ENCODE measurements at regions of chr21 and their contacts with region 1.

Region 1: DNA sequence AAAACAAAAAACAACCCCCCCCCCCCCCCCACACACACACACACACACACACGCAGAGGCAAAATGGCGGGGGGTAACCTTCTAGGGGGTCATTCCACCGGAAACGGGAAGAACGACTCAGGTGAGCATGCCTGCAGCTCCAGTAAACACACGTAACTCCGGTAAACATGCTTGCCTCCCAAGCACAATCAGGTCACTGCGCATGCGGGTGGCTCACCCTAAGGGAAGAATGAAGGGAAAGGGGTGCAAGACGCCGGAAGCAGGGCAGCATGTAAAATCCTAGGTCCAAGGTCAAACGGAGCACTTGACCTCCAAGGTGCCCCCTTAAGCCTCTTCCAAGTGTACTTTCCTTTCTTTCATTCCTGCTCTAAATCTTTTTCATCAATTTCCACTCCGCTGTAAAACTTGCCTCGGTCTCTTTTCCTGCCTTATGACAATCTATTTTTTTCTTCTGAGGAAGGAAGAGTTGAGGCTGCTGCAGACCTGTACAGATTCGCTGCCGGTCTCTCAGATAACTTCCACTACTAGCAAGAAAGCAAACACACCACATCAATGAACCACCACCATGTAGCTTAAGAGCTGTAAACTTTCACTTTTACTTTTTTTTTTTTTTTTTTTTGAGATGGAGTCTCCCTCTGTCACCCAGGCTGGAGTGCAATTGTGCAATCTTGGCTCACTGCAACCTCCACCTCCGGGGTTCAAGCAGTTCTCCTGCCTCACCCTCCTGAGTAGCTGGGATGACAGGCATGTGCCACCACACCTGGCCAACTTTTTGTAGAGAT is 21.0 kb upstream of the CBR3 start:
- DNase-seq: peak; percentile 20
- H3K4me3 Mint-ChIP-seq: peak overlapping the region; percentile 57
- H3K27ac Mint-ChIP-seq: peak overlapping the region; percentile 73
- H3K4me1 Mint-ChIP-seq: peaks cover 29% of the 10 kb centered on the region
- H3K27me3 Mint-ChIP-seq: peaks cover 14% of the 10 kb centered on the region

Region 2: DNA sequence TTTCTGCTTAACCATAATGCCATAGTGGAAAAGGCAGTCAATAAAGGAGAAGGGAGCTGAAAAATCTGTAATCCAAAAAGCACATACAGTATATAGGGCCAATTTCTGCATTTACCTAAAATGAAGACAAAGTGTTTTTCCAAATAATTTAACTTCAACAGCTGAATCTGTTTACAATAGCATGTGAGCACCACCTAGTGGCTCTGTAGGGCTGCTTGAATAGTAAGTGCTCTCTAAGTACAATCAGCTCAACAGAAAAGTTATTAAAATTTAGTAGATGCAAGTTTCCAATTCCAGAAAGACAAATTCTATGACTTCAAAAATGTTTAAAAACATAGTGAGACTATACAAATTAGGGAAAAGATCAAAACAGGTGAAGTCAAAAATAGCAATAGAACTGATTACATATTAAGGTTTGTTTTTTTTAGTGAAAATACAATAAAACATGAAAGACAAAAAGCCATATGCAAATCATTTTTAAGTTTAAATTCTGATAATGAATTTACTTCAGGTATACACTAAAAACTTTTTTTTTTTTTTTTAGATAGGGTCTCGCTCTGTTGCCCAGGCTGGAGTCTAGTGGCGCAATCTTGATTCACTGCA is 273.5 kb before region 1 on chr21:
- CTCF ChIA-PET with region 1: interaction called, 11 read pairs
- POLR2A ChIA-PET with region 1: no interaction called
- DNase-seq: peak; percentile 52
- H3K4me3 Mint-ChIP-seq: no peak overlapping the region
- H3K27ac Mint-ChIP-seq: no peak overlapping the region
- H3K4me1 Mint-ChIP-seq: no peaks in the 10 kb centered on the region
- H3K27me3 Mint-ChIP-seq: peaks cover 13% of the 10 kb centered on the region

Region 3: DNA sequence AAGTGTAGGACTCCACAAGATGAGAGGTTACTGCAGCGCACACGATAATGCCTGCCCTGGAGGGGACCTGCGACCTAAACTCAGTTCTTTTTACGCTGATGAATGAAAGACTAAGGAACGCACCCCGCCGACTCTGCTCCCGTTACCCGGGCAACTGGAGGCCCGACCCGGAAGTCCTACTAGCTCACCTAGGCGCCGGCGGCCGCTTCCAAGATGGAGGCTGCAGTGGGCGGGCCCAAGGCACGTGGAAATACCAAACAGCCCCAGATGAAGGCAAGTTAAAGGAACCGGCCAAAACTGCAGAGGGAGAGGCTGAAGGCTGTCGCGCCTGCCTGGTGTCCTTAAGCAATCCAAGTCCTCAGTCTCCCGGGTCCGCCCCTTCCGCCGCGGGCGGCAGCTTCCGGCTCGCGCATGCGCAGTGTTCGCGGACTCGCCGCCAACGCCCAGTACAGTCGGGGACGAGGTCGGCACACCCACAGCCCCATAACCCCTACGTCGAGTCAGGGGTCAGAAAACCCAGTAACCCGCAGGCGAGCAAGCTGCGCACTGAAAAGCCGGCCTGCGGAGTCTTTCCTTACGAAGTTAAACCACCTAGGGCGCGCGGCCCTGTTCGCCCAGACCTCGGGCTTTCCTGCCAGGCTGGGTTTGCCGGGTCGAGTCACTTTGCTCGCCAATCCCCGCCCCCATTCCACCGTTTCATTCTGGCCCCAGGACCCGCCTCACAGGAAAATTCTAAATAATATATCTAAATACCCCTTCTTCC is 53.5 kb before region 1 on chr21 and contains the start of gene SETD4:
- CTCF ChIA-PET with region 1: interaction called, 22 read pairs
- POLR2A ChIA-PET with region 1: interaction called, 21 read pairs
- DNase-seq: peak; percentile 90
- H3K4me3 Mint-ChIP-seq: peak within 1 kb of the TSS; percentile 96
- H3K27ac Mint-ChIP-seq: peak within 1 kb of the TSS; percentile 98
- H3K4me1 Mint-ChIP-seq: peaks cover 35% of the 10 kb centered on the region
- H3K27me3 Mint-ChIP-seq: peaks cover 2% of the 10 kb centered on the region
- total RNA-seq, gene SETD4: 15.5 to 17.4 TPM

Region 4: DNA sequence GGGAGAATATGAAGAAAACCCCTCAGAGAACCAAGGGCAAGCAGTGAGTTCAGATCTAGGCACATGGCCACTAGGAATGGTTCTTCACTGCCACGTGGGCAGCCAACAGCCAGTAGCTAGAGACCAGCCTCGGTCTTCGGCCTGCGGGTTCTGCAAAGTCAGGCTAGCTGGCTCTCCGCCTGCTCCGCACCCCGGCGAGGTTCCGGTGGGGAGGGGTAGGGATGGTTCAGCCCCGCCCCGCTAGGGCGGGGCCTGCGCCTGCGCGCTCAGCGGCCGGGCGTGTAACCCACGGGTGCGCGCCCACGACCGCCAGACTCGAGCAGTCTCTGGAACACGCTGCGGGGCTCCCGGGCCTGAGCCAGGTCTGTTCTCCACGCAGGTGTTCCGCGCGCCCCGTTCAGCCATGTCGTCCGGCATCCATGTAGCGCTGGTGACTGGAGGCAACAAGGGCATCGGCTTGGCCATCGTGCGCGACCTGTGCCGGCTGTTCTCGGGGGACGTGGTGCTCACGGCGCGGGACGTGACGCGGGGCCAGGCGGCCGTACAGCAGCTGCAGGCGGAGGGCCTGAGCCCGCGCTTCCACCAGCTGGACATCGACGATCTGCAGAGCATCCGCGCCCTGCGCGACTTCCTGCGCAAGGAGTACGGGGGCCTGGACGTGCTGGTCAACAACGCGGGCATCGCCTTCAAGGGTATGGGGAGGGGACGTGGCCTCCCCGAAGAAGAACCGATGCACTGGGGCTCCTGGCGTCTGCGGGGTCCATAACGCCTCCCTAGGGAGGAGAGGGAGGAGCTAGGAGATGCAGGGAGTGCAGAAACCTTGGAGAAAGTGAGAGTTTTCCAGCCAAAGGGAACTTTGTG is 43.9 kb before region 1 on chr21 and contains the start of gene CBR1:
- CTCF ChIA-PET with region 1: interaction called, 18 read pairs
- POLR2A ChIA-PET with region 1: no interaction called
- DNase-seq: peak; percentile 92
- H3K4me3 Mint-ChIP-seq: peak within 1 kb of the TSS; percentile 84
- H3K27ac Mint-ChIP-seq: peak within 1 kb of the TSS; percentile 80
- H3K4me1 Mint-ChIP-seq: peaks cover 56% of the 10 kb centered on the region
- H3K27me3 Mint-ChIP-seq: peaks cover 5% of the 10 kb centered on the region
- total RNA-seq, gene CBR1: 42.0 to 44.1 TPM

Region 5: DNA sequence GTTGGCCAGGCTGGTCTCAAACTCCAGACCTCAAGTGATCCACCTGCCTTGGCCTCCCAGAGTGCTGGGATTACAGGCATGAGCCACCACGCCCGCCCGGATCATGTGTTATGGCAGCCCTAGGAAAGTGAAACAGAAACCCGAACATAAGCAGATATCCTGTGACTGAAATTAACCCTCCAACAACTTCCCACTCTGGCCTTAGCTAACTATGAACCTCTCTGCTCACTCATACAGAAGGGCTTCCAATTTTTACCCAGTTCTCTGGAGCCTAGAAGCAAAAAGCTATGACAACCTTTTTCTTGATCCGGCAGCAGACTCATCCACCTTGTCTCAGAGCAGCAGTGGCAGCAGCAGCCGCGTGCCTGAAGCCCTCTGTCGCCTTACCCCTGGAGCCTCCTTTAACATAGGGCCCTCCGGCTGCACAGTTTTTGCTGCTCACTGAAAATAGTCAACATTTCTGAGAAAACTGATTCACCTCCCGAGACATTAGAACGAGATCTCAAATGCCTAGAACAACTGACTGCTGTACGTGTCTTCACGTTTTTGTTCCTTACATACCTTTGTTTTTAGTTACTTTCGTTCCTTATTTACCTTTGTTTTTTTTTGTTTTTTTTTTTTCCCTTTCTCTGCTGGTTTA is 34.7 kb before region 1 on chr21:
- CTCF ChIA-PET with region 1: interaction called, 13 read pairs
- POLR2A ChIA-PET with region 1: interaction called, 4 read pairs
- DNase-seq: peak; percentile 61
- H3K4me3 Mint-ChIP-seq: peak overlapping the region; percentile 77
- H3K27ac Mint-ChIP-seq: peak overlapping the region; percentile 98
- H3K4me1 Mint-ChIP-seq: peaks cover 47% of the 10 kb centered on the region
- H3K27me3 Mint-ChIP-seq: no peaks in the 10 kb centered on the region

Region 6: GRCh38 chr21:36103434-36103833 is 10.4 kb before region 1 on chr21:
- CTCF ChIA-PET with region 1: interaction called, 12 read pairs
- POLR2A ChIA-PET with region 1: interaction called, 3 read pairs
- DNase-seq: no peak
- H3K4me3 Mint-ChIP-seq: no peak overlapping the region
- H3K27ac Mint-ChIP-seq: no peak overlapping the region
- H3K4me1 Mint-ChIP-seq: peaks cover 6% of the 10 kb centered on the region
- H3K27me3 Mint-ChIP-seq: peaks cover 54% of the 10 kb centered on the region

Region 7: DNA sequence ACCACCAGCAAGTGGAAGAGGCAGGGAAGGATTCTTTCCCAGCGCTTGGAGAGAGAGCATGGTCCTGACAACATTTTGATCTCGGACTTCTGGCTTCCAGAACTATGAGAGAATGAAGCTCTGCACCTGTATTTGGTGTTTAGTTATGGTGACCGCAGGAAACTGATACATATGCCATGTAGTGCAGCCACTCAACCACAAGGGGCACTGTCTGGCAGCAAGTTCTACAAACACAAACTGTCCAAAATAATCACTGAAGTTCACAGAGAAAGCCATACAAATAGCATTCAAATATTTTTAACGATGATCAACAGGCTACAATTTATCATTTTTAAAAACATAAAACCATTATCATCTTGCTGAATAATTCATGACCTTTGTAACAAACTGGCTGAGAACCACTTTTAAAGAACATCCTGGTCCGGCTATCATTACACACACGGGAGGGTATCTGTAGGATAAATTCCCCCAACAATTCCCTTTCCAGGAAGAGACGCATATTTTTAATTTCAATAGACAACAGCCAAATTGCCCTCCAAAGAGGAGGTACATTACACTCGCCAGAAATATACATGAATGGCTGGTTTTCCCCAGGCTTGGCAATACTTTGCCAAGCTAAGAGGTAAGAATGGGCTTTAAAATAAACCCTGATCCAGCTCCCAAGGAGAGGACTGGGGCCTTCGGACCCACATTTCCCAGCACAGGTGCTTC is 11.8 kb after region 1 on chr21:
- CTCF ChIA-PET with region 1: interaction called, 40 read pairs
- POLR2A ChIA-PET with region 1: interaction called, 7 read pairs
- DNase-seq: peak; percentile 68
- H3K4me3 Mint-ChIP-seq: no peak overlapping the region
- H3K27ac Mint-ChIP-seq: no peak overlapping the region
- H3K4me1 Mint-ChIP-seq: peaks cover 16% of the 10 kb centered on the region
- H3K27me3 Mint-ChIP-seq: peaks cover 3% of the 10 kb centered on the region

Measured in activated CD4-positive, alpha-beta memory T cell treated with anti-CD3 and anti-CD28 coated beads, Interleukin-2, amount 10 ng/mL, durations not matched to agents 7 days and 5 days (primary cell).